Ovary (tissue), 10 donors: ENCODE measurements at regions of chr19 and their contacts with region 1.

Region 1: GRCh38 chr19:29985196-29985595 is 43.2 kb downstream of the URI1 start:
- DNase-seq: no peak
- H3K4me3 ChIP-seq: no peak overlapping the region
- H3K27ac ChIP-seq: no peak overlapping the region
- H3K4me1 ChIP-seq: peaks cover 1% of the 10 kb centered on the region
- H3K27me3 ChIP-seq: no peaks in the 10 kb centered on the region
- CTCF ChIP-seq: no peak
- EP300 ChIP-seq: no peak
- POLR2A ChIP-seq: no peak

Region 2: GRCh38 chr19:29966588-29967249 is 18.5 kb before region 1 on chr19:
- intact Hi-C with region 1: loop called in 1 of 4 experiments (anchors 2 kb)
- DNase-seq: no peak
- H3K4me3 ChIP-seq: no peak overlapping the region
- H3K27ac ChIP-seq: no peak overlapping the region
- H3K4me1 ChIP-seq: peaks cover 14% of the 10 kb centered on the region
- H3K27me3 ChIP-seq: no peaks in the 10 kb centered on the region
- CTCF ChIP-seq: no peak
- EP300 ChIP-seq: no peak
- POLR2A ChIP-seq: no peak